Dorsolateral prefrontal cortex (tissue), 120 donors: ENCODE measurements at regions of chr22 and their contacts with region 1.

Region 1: DNA sequence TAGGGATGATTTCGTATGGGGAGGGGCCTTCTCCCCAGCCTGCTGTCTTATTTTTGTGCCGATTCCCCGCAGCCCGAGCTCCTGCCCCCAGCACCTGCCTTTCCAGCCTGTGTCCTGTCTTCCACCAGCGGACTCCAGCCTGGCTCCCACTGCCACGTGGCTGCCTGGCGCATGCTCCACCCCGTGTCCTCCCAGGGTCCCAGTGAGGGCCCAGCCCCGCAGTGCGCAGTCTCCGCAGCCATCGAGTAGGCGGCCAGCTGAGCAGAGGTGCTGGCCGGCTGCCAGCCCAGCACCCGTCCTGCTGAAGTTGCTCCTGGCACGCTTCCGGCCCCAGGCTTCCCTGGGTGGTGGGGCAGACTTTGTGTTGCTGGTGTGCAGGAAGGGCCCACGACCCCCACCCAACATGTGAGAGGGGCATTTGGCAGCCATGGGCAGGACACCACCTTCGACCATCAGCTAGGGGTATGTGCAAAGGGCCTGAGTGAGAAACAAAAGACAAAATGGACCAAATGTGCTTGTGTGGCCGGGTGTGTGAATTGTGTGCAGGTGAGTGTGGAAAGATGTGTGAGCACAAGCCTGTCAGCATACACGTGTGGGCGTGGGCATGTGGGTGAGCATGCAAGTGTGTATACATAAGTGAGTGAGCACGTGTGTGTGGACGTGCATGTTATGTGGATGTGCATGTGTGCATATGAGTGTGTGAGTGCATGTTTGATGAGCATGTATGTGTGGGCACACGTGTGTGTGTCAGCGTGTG is 55.9 kb downstream of the RTN4R start:
- DNase-seq: peak in 7 of 10 donors; percentile 23 to 70 (median 45)
- H3K4me3 ChIP-seq: peak overlapping the region in 6 of 59 donors; percentile 7 to 27 (median 16)
- H3K27ac ChIP-seq: peak overlapping the region in 38 of 59 donors; percentile 5 to 83 (median 54)
- H3K27me3 ChIP-seq: no peaks in the 10 kb centered on the region
- CTCF ChIP-seq: no peak

Region 2: DNA sequence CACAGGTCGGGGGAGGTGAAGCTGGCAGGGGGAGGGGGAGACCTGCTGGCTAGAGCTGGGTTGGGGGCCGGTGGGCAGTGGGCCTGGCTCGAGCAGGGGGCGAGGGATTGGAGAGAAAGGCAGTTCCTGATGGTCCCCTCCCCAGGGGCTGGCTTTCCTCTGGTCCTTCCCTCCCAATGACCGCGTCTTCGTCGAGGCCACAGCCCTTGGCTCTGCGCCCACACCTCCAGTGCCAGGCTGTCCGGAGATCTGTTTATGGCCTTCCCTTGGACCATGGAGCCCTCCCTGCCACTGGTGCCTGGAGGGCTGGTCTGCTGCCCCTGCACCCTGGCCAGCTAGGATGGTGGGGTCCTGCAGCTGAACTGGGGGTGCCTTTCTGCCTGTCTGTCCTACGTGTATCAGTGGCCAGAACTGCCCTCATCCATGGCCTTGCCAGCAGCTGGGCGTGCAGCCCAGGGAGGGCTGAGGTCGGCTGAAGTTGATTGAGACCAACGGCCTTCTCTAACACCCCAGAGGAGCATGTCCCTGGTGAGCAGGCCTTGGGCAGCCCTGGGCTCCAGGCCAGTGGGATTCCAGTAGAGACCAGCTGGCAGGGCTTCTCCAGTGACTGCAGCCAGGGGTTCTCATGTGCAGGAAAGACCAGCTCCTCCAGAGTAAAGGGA is 179.0 kb before region 1 on chr22:
- intact Hi-C with region 1: no loop called
- DNase-seq: peak in 7 of 10 donors; percentile 24 to 70 (median 61)
- H3K4me3 ChIP-seq: no peak overlapping the region
- H3K27ac ChIP-seq: peak overlapping the region in 56 of 59 donors; percentile 3 to 90 (median 72)
- H3K27me3 ChIP-seq: no peaks in the 10 kb centered on the region
- CTCF ChIP-seq: no peak

Region 3: GRCh38 chr22:20243537-20244249 is 31.5 kb after region 1 on chr22:
- intact Hi-C with region 1: loop called in 1 of 2 experiments (anchors 2 kb)
- DNase-seq: peak in 9 of 10 donors; percentile 59 to 89 (median 83)
- H3K4me3 ChIP-seq: peak overlapping the region in 6 of 59 donors; percentile 12 to 36 (median 24)
- H3K27ac ChIP-seq: peak overlapping the region in 58 of 59 donors; percentile 10 to 97 (median 88)
- H3K27me3 ChIP-seq: no peaks in the 10 kb centered on the region
- CTCF ChIP-seq: no peak